Mammary epithelial cell (primary cell): ENCODE measurements at regions of chr2 and their contacts with region 1.

Region 1: GRCh38 chr2:54894467-54894866 is 155.8 kb downstream of the RTN4 start:
- DNase-seq: no peak
- H3K4me3 ChIP-seq: no peak overlapping the region
- H3K27ac ChIP-seq: no peak overlapping the region
- H3K4me1 ChIP-seq: no peaks in the 10 kb centered on the region
- H3K27me3 ChIP-seq: no peaks in the 10 kb centered on the region
- CTCF ChIP-seq: no peak

Region 2: DNA sequence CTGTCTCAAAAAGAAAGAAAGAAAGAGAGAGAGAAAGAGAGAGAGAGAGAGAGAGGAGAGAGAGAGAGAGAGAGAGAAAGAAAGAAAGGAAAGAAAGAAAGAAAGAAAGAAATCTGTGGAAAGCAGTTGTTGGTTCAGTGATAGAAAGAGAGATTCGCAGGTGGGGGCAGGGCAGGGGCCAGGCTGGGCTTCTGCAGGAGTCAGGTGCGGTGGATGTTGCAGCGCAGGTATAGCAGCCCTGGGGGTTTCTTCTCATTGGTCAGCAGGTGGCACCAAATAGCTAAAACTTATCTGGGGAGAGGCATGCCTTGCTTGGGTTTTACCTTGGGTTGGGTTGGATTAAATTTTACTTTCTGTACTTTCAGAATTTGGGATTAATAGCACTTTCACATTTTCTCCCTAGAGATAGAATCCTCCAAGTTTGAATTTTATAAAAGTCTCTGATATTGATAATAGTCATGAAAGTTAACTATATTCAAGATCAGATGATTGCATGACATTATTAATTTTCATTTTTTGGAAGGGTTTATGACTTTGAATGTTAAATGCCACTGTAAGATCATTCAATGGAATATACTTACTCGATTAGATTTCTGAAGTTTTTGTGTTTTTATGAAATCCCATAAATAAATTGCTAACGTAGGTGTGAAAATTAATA is 371.7 kb before region 1 on chr2:
- CTCF ChIA-PET with region 1: no interaction called
- dilution Hi-C with region 1: no loop called
- in situ Hi-C with region 1: no loop called
- intact Hi-C with region 1: no loop called
- DNase-seq: peak; percentile 72
- H3K4me3 ChIP-seq: no peak overlapping the region
- H3K27ac ChIP-seq: peak overlapping the region; percentile 49
- H3K4me1 ChIP-seq: peaks cover 46% of the 10 kb centered on the region
- H3K27me3 ChIP-seq: no peaks in the 10 kb centered on the region
- CTCF ChIP-seq: peak; percentile 73 to 78

Region 3: DNA sequence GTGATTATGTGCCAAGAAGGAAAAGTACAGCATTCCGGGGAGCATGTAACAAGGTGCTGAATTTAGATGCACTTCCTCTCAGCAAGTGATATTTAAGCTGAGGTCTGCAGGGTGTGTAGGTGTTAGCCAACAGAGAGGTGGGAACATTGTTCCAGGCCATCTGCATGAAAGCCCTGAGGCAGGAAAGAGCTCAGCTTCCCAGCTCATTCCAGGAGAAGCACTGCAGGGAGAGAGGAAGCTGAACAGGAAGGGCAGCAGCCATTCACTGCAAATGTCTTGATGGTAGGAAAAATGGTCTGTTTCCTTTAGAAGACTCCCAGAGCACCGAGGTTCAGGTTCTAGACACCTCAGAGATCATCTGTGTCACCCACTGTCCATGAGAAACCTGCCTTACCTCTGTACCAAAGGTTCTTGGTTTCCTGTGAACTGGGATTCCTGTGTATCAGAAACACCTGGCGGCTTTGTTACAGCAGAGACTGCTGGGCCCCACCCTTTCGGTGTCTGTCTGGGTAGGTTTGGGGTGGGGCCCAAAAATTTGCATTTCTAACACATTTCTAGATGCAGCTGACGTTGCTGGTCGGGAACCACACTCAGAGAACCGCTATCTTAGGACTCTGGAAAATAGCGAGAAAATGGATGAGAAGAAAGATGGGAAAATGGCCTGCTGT is 71.8 kb after region 1 on chr2:
- CTCF ChIA-PET with region 1: no interaction called
- dilution Hi-C with region 1: loop called (anchors 5 kb)
- in situ Hi-C with region 1: no loop called
- intact Hi-C with region 1: no loop called
- DNase-seq: peak; percentile 58
- H3K4me3 ChIP-seq: no peak overlapping the region
- H3K27ac ChIP-seq: no peak overlapping the region
- H3K4me1 ChIP-seq: peaks cover 26% of the 10 kb centered on the region
- H3K27me3 ChIP-seq: no peaks in the 10 kb centered on the region
- CTCF ChIP-seq: no peak